Right cardiac atrium (tissue), 5 donors: ENCODE measurements at regions of chr10 and their contacts with region 1.

Region 1: GRCh38 chr10:9302120-9302746 is 1247.7 kb downstream of the GATA3 start:
- DNase-seq: no peak
- ATAC-seq: no peak
- H3K4me3 ChIP-seq: no peak overlapping the region
- H3K27ac ChIP-seq: no peak overlapping the region
- H3K4me1 ChIP-seq: no peaks in the 10 kb centered on the region
- H3K27me3 ChIP-seq: no peaks in the 10 kb centered on the region

Region 2: DNA sequence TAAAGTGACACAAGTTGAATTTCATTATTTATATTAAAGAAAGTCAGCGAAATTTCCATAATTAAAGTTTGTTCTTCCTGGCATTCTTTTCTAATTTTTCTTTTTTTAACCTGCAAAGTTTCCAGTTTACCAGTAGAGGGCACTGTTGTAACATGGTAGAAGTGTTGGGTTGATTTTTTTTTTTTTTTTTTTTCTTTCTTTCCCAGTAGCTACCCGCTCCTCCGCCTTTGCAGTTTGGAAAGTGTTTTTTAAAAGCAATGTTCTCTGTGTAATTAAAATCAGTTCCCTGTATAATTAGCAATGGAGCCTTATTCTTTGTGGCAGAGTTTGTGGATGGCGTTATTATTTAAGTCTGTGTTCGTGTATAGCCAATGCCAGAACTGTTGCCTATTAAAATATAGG is 1430.2 kb before region 1 on chr10:
- intact Hi-C with region 1: loop called in 3 of 4 experiments (anchors 5 to 10 kb)
- DNase-seq: no peak
- ATAC-seq: no peak
- H3K4me3 ChIP-seq: peak overlapping the region; percentile 87
- H3K27ac ChIP-seq: no peak overlapping the region
- H3K4me1 ChIP-seq: no peaks in the 10 kb centered on the region
- H3K27me3 ChIP-seq: no peaks in the 10 kb centered on the region

Region 3: DNA sequence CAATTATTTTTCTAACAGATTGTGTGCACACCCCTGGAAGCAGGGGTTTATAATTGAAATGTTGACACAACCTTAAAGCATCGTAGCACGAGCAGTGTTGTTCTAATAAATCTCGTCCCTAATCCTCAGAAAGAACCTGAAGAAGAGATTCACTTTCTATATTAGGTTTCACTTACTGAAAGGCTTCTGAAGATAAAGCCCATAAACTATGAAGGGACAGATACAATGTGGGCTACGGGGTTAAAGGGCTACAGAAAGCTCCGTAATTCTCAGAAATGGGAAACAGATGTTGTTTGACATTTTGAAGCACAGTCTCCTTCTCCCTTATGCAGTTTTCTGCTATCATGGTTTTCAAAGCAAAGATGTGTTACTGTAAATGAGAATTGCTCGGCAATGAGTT is 768.1 kb before region 1 on chr10:
- intact Hi-C with region 1: no loop called
- DNase-seq: no peak
- ATAC-seq: no peak
- H3K4me3 ChIP-seq: no peak overlapping the region
- H3K27ac ChIP-seq: no peak overlapping the region
- H3K4me1 ChIP-seq: no peaks in the 10 kb centered on the region
- H3K27me3 ChIP-seq: no peaks in the 10 kb centered on the region

Region 4: GRCh38 chr10:9126728-9127127 is 175.5 kb before region 1 on chr10:
- intact Hi-C with region 1: no loop called
- DNase-seq: no peak
- ATAC-seq: no peak
- H3K4me3 ChIP-seq: no peak overlapping the region
- H3K27ac ChIP-seq: no peak overlapping the region
- H3K4me1 ChIP-seq: no peaks in the 10 kb centered on the region
- H3K27me3 ChIP-seq: no peaks in the 10 kb centered on the region

Region 5: GRCh38 chr10:9547936-9548904 is 246.0 kb after region 1 on chr10:
- intact Hi-C with region 1: no loop called
- DNase-seq: no peak
- ATAC-seq: peak in 1 of 2 donors; percentile 48
- H3K4me3 ChIP-seq: no peak overlapping the region
- H3K27ac ChIP-seq: no peak overlapping the region
- H3K4me1 ChIP-seq: no peaks in the 10 kb centered on the region
- H3K27me3 ChIP-seq: no peaks in the 10 kb centered on the region

Region 6: DNA sequence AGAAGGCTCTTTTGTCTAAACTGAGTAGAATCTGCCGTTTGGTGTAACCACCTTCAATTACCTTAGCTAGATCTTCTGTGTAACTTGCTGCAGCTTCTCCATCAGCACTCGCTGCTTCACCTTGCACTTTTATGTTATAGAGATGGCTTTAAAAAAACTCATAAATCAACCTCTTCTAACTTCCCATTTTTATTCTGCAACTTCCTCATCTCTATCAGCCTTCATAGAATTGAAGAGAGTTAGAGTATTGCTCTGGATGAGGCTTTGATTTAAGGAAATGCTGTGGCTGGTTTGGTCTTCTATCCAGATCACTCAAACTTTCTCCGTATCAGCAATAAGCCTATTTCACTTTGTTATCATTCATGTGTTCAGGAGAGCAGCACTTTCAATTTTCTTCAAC is 583.5 kb after region 1 on chr10:
- intact Hi-C with region 1: no loop called
- DNase-seq: no peak
- ATAC-seq: no peak
- H3K4me3 ChIP-seq: no peak overlapping the region
- H3K27ac ChIP-seq: no peak overlapping the region
- H3K4me1 ChIP-seq: no peaks in the 10 kb centered on the region
- H3K27me3 ChIP-seq: no peaks in the 10 kb centered on the region